ENCODE measurements at regions of chr7 and their contacts with region 1.

Region 1: DNA sequence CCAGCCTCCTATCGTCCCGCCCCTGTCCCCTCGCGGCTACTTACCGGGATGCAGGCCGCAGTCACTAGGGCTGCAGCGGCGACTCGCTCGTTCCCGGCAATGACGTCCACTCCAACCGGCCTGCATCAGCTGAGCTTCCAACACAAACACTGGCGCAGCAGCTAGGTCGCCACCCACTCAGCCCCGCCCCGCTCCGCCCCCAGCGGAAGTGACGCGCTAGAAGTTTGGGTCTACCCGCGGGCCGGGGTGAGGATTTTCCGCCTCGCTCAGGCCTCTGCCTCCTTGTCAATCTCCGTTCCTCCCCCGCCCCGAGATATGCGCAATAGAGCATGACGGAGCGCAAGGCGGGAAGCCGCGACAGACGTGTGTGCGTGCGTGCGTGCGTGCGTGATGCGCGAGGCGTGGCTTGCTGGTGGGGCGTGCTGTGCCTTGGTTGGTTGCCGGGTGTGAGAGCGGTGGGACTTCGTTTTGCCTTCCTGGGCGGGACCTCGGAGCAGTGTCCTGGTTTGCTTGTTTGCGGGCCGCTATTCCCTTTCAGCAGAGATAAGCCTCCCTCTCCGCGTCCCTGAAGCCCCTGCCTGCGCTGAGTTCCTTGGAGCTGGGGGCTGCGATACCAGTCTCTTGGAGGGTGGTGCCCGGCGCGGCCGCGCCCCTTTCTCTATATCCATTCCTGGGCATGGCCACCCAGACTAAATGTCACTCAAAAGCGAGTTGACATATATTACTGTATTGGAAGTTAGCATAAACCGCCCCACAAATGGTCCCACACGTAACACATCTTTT is at the start of gene PNPLA8:
- DNase-seq: peak; percentile 100
- H3K4me3 Mint-ChIP-seq: peak within 1 kb of the TSS; percentile 92
- H3K27ac Mint-ChIP-seq: peak within 1 kb of the TSS; percentile 97
- H3K4me1 Mint-ChIP-seq: peaks cover 36% of the 10 kb centered on the region
- H3K27me3 Mint-ChIP-seq: no peaks in the 10 kb centered on the region
- total RNA-seq, gene PNPLA8: 18.8 to 18.9 TPM

Region 2: GRCh38 chr7:107890962-107891635 is 635.1 kb before region 1 on chr7 and contains the start of gene DLD:
- CTCF ChIA-PET with region 1: no interaction called
- intact Hi-C with region 1: loop called (anchors 1 kb)
- DNase-seq: peak; percentile 96
- H3K4me3 Mint-ChIP-seq: peak within 1 kb of the TSS; percentile 100
- H3K27ac Mint-ChIP-seq: peak within 1 kb of the TSS; percentile 98
- H3K4me1 Mint-ChIP-seq: peaks cover 37% of the 10 kb centered on the region
- H3K27me3 Mint-ChIP-seq: no peaks in the 10 kb centered on the region
- total RNA-seq, gene DLD: 92.6 to 96.8 TPM

Region 3: DNA sequence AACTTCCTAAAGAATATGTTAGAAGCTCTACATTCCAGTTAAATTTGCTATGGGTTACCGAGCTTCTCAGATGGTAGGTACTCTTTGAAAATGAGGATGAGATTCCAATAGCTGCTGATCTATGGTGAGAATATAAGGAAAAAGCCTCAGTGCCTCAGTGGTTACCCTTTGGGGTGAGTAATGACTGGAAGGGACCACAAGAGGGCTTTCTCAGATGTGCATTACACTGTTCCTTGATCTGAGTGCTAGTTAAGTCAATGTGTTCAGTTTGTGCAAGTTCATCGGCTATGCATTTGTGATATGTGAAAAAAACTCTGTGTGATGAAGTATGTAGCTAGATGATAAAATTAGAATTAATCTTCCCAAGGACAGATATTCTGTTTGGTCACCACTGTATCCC is 73.5 kb before region 1 on chr7:
- CTCF ChIA-PET with region 1: no interaction called
- intact Hi-C with region 1: loop called (anchors 2 kb)
- DNase-seq: no peak
- H3K4me3 Mint-ChIP-seq: no peak overlapping the region
- H3K27ac Mint-ChIP-seq: no peak overlapping the region
- H3K4me1 Mint-ChIP-seq: peaks cover 12% of the 10 kb centered on the region
- H3K27me3 Mint-ChIP-seq: peaks cover 33% of the 10 kb centered on the region

Measured in activated naive CD4-positive, alpha-beta T cell treated with anti-CD3 and anti-CD28 coated beads for 36 hours (primary cell).